Activated naive CD4-positive, alpha-beta T cell treated with anti-CD3 and anti-CD28 coated beads for 36 hours (primary cell): ENCODE measurements at regions of chr17 and their contacts with region 1.

Region 1: GRCh38 chr17:32461853-32462617 is 17.7 kb downstream of the PSMD11 start:
- DNase-seq: peak; percentile 83
- H3K4me3 Mint-ChIP-seq: no peak overlapping the region
- H3K27ac Mint-ChIP-seq: peak overlapping the region; percentile 72
- H3K4me1 Mint-ChIP-seq: peaks cover 37% of the 10 kb centered on the region
- H3K27me3 Mint-ChIP-seq: no peaks in the 10 kb centered on the region

Region 2: DNA sequence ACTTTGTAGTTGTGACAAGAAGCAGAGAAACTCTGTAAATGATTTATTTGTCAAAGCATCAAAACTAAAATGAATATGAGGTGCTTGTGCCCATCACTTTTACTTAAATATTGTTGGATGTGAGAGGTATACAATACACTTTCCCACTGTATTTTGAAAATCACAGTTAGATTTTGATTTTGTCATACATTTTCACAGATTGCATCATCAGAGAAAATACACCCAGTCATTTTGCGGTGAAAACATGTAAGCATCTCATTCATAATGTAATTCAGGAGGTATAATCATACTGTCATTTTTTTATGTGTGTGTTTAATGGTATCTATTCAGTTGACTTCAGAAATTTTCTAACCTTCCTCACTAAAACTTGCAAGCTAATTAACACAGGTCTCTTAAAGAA is 100.8 kb before region 1 on chr17:
- CTCF ChIA-PET with region 1: no interaction called
- intact Hi-C with region 1: no loop called
- DNase-seq: no peak
- H3K4me3 Mint-ChIP-seq: no peak overlapping the region
- H3K27ac Mint-ChIP-seq: no peak overlapping the region
- H3K4me1 Mint-ChIP-seq: peaks cover 38% of the 10 kb centered on the region
- H3K27me3 Mint-ChIP-seq: no peaks in the 10 kb centered on the region

Region 3: DNA sequence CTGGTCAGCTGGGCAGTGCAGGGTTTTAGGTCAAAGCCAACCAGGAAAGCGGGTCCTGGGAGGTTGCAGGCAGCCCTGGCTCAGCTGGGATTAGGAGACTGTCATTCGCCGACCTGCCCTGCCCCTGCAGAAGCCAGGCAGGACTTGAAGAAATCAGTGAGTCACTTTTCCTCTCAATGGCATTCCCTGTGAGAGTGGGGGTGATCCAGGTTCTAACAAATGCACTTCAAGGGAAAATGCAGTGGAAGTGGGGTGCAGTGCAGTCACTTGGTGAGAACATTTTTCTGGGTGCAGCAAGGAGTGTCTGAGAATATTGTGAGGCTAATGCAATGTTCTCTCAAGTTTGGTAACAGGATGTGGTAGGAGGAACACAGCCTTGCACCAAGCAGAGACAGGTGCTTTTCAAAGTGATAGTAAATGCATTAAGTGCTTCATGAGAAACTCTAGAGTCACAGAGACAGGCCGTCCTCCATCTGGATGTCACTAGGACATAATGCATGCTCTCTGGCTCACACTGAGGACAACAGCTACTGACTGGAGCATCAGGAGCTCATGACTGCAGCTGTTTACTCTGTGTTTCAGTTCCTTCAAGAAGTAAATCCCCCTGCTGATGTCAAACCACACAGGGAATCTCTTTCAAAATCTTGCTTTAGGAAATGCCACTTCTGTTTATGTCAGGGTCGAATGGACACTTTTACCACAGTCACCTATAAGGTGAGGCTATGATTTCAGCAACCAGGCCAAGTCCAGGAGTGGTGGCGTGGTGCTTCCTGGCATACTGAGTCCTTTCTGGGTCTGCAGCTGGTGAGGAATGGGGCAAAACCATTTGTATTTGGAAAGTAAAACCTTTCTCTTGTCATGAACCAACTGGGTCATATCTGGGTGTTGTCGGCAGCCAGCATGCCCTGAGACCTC is 41.5 kb after region 1 on chr17:
- CTCF ChIA-PET with region 1: no interaction called
- intact Hi-C with region 1: no loop called
- DNase-seq: peak; percentile 83
- H3K4me3 Mint-ChIP-seq: peak overlapping the region; percentile 47
- H3K27ac Mint-ChIP-seq: peak overlapping the region; percentile 97
- H3K4me1 Mint-ChIP-seq: peaks cover 76% of the 10 kb centered on the region
- H3K27me3 Mint-ChIP-seq: no peaks in the 10 kb centered on the region

Region 4: GRCh38 chr17:32609085-32609484 is 147.1 kb after region 1 on chr17:
- CTCF ChIA-PET with region 1: interaction called, 9 read pairs
- intact Hi-C with region 1: loop called (anchors 1 kb)
- DNase-seq: peak; percentile 89
- H3K4me3 Mint-ChIP-seq: no peak overlapping the region
- H3K27ac Mint-ChIP-seq: no peak overlapping the region
- H3K4me1 Mint-ChIP-seq: peaks cover 8% of the 10 kb centered on the region
- H3K27me3 Mint-ChIP-seq: no peaks in the 10 kb centered on the region